HAP-1 (cell line): ENCODE measurements at regions of chr2 and their contacts with region 1.

Region 1: DNA sequence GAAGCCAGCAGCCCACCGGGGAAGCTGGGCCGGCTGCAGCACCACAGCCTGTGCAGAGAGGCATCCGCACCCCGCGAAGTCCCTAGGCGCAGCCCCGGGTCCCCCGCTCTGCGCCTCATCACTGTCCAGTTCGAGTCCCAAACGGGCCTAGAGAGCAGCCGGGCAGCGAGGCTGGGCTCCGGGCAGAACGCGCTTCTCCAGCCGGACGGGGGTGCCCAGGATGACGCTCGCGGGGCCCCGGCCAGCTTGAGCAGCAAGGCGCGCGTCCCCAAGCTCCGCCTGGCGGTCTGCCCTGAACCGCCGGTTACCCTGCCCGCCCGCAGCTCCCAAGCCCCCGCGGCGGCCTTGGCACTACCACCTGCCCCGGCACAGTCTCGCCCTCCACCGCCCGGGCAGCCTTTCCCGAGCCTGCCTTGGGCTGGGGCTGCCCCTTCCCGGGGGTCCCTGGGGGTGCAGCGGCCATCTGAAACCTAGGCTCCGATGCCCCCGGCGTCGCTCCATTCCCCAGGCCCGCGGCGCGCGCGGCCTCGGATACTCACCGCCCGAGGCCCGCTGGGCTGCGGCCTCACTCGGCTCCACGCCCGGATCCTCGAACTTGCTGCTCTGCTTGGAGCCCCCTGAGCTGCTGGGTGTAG is 591 bp downstream of the SLC16A14 start:
- DNase-seq: peak; percentile 26 to 68
- H3K4me3 ChIP-seq: peak overlapping the region; percentile 71
- H3K4me1 ChIP-seq: peaks cover 7% of the 10 kb centered on the region
- H3K27me3 ChIP-seq: no peaks in the 10 kb centered on the region

Region 2: DNA sequence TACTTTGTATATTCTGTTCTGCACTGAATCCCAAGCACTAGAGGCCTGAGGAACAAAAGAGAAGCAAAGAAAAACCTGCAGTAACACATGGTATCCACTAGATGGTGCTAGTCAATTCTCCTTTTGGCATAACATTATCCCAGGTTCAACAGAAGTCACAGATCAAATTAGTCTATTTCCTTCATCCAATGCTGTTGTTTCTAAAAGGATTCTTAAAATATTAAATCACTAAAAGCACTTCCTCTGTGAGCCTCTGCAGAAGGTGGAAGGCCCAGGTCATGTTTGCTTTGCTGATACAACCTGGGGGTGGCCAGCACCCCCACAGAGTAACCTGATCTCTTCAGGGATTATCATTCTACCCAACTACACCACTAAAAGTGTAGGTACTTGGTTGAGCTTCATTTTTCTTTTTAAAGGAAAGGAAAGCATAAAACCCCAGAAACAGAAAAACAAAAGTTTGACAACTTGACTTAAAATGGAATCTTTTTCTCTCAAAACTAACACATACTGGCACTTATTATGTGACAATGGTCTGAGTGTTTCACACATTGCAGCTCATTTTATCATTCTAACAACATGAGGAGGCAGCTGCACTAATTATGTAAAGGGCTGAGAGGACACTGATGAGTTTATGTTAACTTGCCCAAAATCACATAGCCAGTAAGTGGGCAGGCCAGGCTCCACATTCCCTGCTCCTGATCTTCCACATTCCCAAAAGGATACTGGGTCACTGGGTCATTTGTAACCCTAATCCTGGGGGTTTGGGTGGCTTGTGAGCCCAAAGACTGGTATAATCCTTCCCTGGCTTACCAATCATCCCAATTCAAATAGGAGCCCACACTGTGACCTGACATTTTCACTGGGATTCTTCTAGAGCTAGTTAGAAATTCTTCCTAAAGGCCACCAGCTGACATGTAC is 287.0 kb before region 1 on chr2:
- in situ Hi-C with region 1: loop called (anchors 25 kb)
- DNase-seq: peak in 1 of 2 experiments; percentile 75
- H3K4me3 ChIP-seq: no peak overlapping the region
- H3K4me1 ChIP-seq: peaks cover 24% of the 10 kb centered on the region
- H3K27me3 ChIP-seq: no peaks in the 10 kb centered on the region